ENCODE measurements at regions of chr6 and their contacts with region 1.

Region 1: GRCh38 chr6:149513915-149514314 is 29.1 kb upstream of the ZC3H12D start:
- DNase-seq: no peak
- H3K4me3 ChIP-seq: no peak overlapping the region
- H3K27me3 ChIP-seq: no peaks in the 10 kb centered on the region
- CTCF ChIP-seq: no peak

Region 2: DNA sequence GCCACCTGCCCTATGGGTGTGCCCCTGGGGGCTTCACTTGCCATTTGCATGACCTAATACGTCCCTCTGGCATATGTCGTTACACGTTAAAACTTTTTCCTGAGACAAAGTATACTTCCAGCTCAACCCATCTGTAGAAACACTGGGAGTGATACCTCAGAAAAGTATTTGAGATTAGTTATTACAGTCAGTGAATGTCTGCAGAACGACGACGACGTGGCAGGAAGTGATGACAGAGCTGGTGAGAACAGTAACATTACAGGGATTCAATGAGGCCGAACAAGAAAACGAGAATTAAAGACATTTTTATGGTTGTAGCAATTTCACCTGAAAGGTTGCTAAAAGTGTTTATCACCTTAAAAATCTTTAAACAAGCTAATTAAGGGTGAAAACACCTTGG is 1131.1 kb before region 1 on chr6:
- CTCF ChIA-PET with region 1: no interaction called
- POLR2A ChIA-PET with region 1: interaction called, 14 read pairs
- DNase-seq: no peak
- H3K4me3 ChIP-seq: no peak overlapping the region
- H3K27me3 ChIP-seq: no peaks in the 10 kb centered on the region
- CTCF ChIP-seq: no peak

Region 3: GRCh38 chr6:149246691-149247384 is 267.1 kb before region 1 on chr6:
- CTCF ChIA-PET with region 1: no interaction called
- POLR2A ChIA-PET with region 1: no interaction called
- DNase-seq: no peak
- H3K4me3 ChIP-seq: no peak overlapping the region
- H3K27me3 ChIP-seq: peaks cover 3% of the 10 kb centered on the region
- CTCF ChIP-seq: no peak

Region 4: DNA sequence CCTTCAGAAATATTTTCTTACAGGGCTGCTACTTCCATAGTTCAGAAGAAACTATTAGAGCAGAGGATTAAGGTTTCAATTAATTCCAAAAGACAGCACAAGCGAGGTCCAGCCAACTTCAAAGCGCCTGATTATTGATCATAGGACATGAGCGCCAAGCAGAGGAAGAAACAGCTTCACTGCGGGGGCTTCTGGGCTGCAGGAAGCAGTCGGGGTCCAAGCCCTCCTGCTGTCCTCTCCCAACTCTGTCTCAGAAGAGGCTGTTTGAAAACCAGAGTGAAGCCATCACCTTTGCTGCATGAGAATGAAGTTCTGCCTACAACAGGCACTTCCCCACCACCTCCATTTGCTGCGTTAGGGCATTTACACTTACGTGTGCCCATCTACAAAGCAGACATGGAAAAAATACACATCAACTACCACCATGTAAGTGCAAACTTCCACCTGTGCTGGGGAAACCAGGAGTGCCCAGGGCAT is 89.9 kb before region 1 on chr6:
- CTCF ChIA-PET with region 1: no interaction called
- POLR2A ChIA-PET with region 1: no interaction called
- DNase-seq: no peak
- H3K4me3 ChIP-seq: no peak overlapping the region
- H3K27me3 ChIP-seq: peaks cover 6% of the 10 kb centered on the region
- CTCF ChIP-seq: no peak